ENCODE measurements at regions of chr1 and their contacts with region 1.

Region 1: GRCh38 chr1:205354259-205354904 is 2.3 kb downstream of the KLHDC8A start:
- DNase-seq: peak; percentile 50
- H3K27ac ChIP-seq: no peak overlapping the region
- CTCF ChIP-seq: peak; percentile 90

Region 2: GRCh38 chr1:205365945-205366463 is 11.6 kb after region 1 on chr1:
- CTCF ChIA-PET with region 1: interaction called, 14 read pairs
- POLR2A ChIA-PET with region 1: no interaction called
- DNase-seq: no peak
- H3K27ac ChIP-seq: no peak overlapping the region
- CTCF ChIP-seq: no peak

Region 3: GRCh38 chr1:205547936-205548827 is 193.8 kb after region 1 on chr1:
- CTCF ChIA-PET with region 1: no interaction called
- POLR2A ChIA-PET with region 1: no interaction called
- DNase-seq: no peak
- H3K27ac ChIP-seq: no peak overlapping the region
- CTCF ChIP-seq: no peak

Measured in RWPE1 (cell line).